ENCODE measurements at regions of chr11 and their contacts with region 1.

Region 1: GRCh38 chr11:18749697-18750319 is 23.8 kb upstream of the IGSF22 start:
- DNase-seq: no peak
- H3K4me3 ChIP-seq: no peak overlapping the region
- CTCF ChIP-seq: no peak

Region 2: DNA sequence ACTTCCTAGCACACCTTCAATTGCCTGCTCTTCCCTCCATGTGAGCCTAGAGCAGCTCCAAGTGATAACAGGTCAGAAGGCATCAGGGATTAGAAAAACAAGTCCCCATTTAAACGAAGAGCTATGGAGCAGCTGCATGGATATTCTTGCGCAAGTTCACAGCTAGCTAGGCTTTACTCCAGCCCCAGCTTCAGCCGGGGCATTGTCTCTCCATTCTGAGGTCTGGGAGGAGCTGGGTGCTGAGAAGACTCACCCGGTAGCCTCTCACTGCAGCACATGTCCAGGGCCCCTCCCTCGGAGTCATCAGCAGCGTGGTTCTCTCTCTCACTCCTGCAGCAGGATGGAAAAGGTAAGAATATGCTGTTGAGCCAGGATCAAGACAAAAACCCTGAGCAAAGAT is 15.7 kb after region 1 on chr11:
- CTCF ChIA-PET with region 1: interaction called, 17 read pairs
- POLR2A ChIA-PET with region 1: no interaction called
- DNase-seq: no peak
- H3K4me3 ChIP-seq: no peak overlapping the region
- CTCF ChIP-seq: no peak

Region 3: DNA sequence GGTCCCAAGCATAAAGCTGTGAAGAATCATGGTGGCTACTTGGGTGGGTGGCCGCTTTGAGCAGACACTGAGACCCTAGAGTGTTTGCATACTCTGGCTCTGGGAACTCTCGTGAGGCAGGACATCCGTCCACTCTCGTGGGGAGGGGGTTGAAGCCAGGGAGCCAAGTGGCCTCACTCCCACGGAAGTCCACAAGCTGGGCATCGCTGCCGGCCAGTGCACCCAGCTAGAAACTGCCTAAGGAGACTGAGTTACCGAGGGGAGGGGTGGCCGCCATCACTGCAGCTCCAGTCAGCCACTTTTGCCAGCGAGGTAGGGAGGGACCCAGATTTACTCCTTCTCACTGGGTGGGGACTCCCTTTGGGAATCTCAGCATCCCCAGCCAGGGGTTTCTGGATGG is 290.2 kb after region 1 on chr11:
- CTCF ChIA-PET with region 1: no interaction called
- POLR2A ChIA-PET with region 1: no interaction called
- DNase-seq: no peak
- H3K4me3 ChIP-seq: no peak overlapping the region
- CTCF ChIP-seq: no peak

Measured in AG04449 (cell line).